CD8-positive, alpha-beta memory T cell (primary cell): ENCODE measurements at regions of chr19 and their contacts with region 1.

Region 1: GRCh38 chr19:58483776-58484175 is 7.6 kb downstream of the ZNF446 start:
- DNase-seq: no peak
- H3K4me3 ChIP-seq: no peak overlapping the region
- H3K4me3 Mint-ChIP-seq: no peak overlapping the region
- H3K27ac ChIP-seq: no peak overlapping the region
- H3K27ac Mint-ChIP-seq: no peak overlapping the region
- H3K4me1 ChIP-seq: no peaks in the 10 kb centered on the region
- H3K4me1 Mint-ChIP-seq: peaks cover 0 to 2% (median 1%) of the 10 kb centered on the region in 3 donors
- H3K27me3 ChIP-seq: no peaks in the 10 kb centered on the region
- H3K27me3 Mint-ChIP-seq: no peaks in the 10 kb centered on the region

Region 2: DNA sequence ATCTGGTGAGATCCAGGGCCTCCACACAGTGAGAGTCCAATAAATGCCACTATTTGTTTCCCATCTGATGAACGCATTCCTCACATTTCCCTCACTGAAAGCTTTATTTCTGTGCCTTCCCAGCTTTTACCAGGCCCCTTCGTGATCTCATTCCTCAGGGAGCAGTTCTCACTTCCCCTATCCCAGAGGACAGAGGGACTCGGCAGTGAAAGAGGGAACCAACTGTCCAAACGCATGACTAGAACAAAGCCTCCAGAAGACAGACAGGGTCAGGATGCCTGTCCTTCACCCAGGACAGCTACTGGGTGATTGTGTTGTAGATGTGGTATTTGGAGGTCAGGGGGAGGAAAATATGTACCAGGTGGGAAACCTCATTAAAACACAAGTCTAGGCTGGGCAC is 37.9 kb after region 1 on chr19:
- CTCF ChIA-PET with region 1: no interaction called
- POLR2A ChIA-PET with region 1: no interaction called
- DNase-seq: no peak
- H3K4me3 ChIP-seq: no peak overlapping the region
- H3K4me3 Mint-ChIP-seq: peak overlapping the region in 3 of 7 donors; percentile 23 to 63 (median 46)
- H3K27ac ChIP-seq: no peak overlapping the region
- H3K27ac Mint-ChIP-seq: peak overlapping the region in 4 of 8 donors; percentile 15 to 78 (median 50)
- H3K4me1 ChIP-seq: peaks cover 20% of the 10 kb centered on the region
- H3K4me1 Mint-ChIP-seq: peaks cover 26 to 35% (median 29%) of the 10 kb centered on the region in 3 donors
- H3K27me3 ChIP-seq: no peaks in the 10 kb centered on the region
- H3K27me3 Mint-ChIP-seq: peaks cover 0 to 2% of the 10 kb centered on the region in 2 donors

Region 3: GRCh38 chr19:58572818-58573657 is 89.3 kb after region 1 on chr19 and contains the start of gene MZF1:
- CTCF ChIA-PET with region 1: no interaction called
- POLR2A ChIA-PET with region 1: interaction called, 10 read pairs
- DNase-seq: peak; percentile 99 to 100 (median 100)
- H3K4me3 ChIP-seq: peak within 1 kb of the TSS; percentile 98
- H3K4me3 Mint-ChIP-seq: peak within 1 kb of the TSS; percentile 89 to 99 (median 95)
- H3K27ac ChIP-seq: peak within 1 kb of the TSS; percentile 100
- H3K27ac Mint-ChIP-seq: peak within 1 kb of the TSS; percentile 95 to 100 (median 100)
- H3K4me1 ChIP-seq: peaks cover 29% of the 10 kb centered on the region
- H3K4me1 Mint-ChIP-seq: peaks cover 24 to 49% (median 26%) of the 10 kb centered on the region in 3 donors
- H3K27me3 ChIP-seq: no peaks in the 10 kb centered on the region
- H3K27me3 Mint-ChIP-seq: peaks cover 0 to 9% of the 10 kb centered on the region in 2 donors
- total RNA-seq, gene MZF1: 14.0 to 14.8 TPM